Left cardiac atrium (tissue), 4 donors: ENCODE measurements at regions of chr1 and their contacts with region 1.

Region 1: GRCh38 chr1:160098852-160099561 is 588 bp upstream of the IGSF8 start:
- DNase-seq: peak; percentile 97
- ATAC-seq: peak; percentile 91

Region 2: DNA sequence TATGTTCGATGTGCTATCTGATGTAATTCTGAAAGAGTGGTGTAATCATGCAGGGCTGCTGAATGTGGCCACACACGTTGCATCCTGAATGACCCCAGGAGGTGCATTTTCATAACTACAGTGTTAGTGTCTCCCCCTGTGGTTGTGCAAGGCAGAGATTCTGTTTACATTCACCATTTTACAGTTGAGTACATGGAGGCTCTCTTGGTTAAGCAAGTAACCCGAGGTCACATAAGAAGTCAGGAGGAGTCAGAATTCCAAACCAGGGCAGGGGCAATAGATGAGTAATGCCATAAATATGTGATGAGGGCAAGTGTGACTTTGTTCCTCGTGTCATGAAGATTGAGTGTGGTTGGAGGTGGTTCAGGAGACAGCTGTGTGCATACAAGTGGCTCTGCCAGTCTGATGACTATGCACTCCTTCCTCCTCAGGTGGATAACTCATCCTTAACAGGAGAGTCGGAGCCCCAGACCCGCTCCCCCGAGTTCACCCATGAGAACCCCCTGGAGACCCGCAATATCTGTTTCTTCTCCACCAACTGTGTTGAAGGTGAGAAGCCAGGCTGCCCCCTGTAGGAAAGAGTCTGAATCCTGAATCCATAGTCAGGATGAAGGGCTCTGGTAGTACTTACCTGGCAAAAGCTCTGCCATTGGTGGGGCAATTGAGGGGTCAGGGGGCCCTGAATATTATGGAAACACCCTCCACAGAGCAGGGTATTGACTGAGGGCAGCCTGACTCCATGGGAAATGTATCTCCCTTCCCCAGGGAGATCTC is 25.9 kb after region 1 on chr1:
- intact Hi-C with region 1: no loop called
- DNase-seq: no peak
- ATAC-seq: peak; percentile 51 to 61

Region 3: DNA sequence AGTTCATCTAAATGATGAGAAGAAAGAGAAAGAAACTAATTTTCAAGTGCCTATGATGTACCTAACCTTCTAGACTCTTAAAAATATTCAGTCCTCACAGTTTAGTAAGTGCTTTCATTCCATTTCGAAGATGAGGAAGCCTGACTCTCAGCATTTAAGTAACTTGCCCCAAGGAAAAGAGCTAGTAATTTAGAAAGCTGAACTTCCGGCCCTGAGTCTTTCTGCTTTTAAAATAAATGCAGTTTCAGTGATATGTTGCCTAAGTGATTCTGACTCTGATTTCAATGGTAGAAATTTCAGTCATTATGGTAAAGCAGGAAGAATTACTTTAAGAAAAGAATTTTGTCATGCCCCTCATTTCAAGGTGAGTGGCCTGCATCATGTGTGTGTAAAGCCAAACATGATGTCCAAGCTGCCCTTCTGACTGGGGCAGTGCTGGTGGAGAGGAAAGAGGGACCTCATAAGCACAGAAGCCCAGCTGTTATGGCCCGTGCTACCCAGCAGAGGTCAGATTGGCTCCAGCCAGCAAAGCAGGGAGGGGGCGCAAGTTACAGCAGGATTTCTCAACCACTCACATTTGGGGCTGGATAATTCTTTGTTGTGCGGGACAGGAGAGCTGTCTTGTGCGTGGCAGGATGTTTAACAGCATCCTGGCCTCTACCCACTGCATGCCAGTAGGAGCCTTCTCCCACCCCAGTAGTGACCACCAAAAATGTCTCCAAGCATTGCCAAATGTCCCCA is 63.1 kb after region 1 on chr1:
- intact Hi-C with region 1: no loop called
- DNase-seq: no peak
- ATAC-seq: peak; percentile 65 to 71

Region 4: GRCh38 chr1:160251687-160252526 is 152.9 kb after region 1 on chr1:
- intact Hi-C with region 1: loop called (anchors 5 to 10 kb)
- DNase-seq: peak; percentile 75
- ATAC-seq: peak; percentile 90 to 96

Region 5: GRCh38 chr1:160342953-160343869 is 244.2 kb after region 1 on chr1 and contains the starts of genes COPA and NCSTN:
- intact Hi-C with region 1: loop called in 1 of 2 experiments (anchors 5 kb)
- DNase-seq: peak; percentile 96
- ATAC-seq: peak; percentile 98 to 99
- total RNA-seq, gene COPA: 108 to 147 TPM
- total RNA-seq, gene NCSTN: 57.4 to 70.2 TPM